Naive thymus-derived CD4-positive, alpha-beta T cell (primary cell): ENCODE measurements at regions of chr11 and their contacts with region 1.

Region 1: GRCh38 chr11:67239783-67240575 is 26.3 kb upstream of the GRK2 start:
- DNase-seq: peak; percentile 81 to 99 (median 98)
- ATAC-seq: peak; percentile 94
- H3K4me3 ChIP-seq: peak overlapping the region; percentile 89
- H3K4me3 Mint-ChIP-seq: peak overlapping the region; percentile 93 to 100 (median 98)
- H3K27ac ChIP-seq: peak overlapping the region; percentile 97
- H3K27ac Mint-ChIP-seq: peak overlapping the region; percentile 92 to 100 (median 99)
- H3K4me1 ChIP-seq: peaks cover 24 to 41% of the 10 kb centered on the region in 2 donors
- H3K4me1 Mint-ChIP-seq: peaks cover 47 to 62% (median 61%) of the 10 kb centered on the region in 7 donors
- H3K27me3 ChIP-seq: no peaks in the 10 kb centered on the region
- H3K27me3 Mint-ChIP-seq: no peaks in the 10 kb centered on the region

Region 2: DNA sequence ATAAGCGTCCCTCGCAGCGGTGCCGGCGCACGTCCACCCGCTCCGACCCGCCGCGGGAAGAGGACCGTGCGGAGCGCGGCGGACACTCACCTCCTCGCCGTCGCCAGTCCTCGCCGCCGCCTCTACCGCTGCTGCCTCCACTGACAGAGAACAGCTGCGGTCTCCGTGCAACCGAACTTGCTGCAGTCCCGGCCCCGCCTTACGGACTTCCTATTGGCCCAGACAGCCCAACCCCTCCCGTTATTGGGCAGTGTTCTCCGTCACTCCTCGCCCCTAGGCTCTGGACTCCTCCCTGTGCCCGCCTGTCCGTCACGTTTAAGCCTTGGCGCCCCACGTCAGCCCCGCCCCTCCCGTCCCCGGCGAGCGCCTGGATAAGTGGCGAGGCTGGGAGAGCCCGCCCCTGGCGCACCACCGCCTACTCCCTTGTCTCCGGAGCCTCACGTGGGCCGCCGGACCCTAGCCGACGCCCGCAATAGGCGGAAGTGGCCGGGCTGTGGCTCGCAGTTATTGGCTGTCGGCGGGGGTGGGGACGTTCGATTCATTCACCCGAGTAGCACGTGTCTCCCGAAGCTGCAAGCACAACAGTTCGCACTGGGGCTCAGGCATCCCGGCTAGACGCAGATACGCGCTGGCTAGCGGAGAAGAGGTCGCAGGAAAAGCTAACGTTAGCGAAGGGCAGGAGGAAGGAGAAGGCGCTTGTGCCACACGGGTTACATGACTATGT is 281.6 kb before region 1 on chr11 and contains the start of gene PC:
- CTCF ChIA-PET with region 1: no interaction called
- POLR2A ChIA-PET with region 1: interaction called, 4 read pairs
- intact Hi-C with region 1: loop called (anchors 2 to 5 kb)
- DNase-seq: peak; percentile 83 to 98 (median 96)
- ATAC-seq: peak; percentile 98
- H3K4me3 ChIP-seq: peak within 1 kb of the TSS; percentile 81
- H3K4me3 Mint-ChIP-seq: peak within 1 kb of the TSS; percentile 82 to 95 (median 91)
- H3K27ac ChIP-seq: peak within 1 kb of the TSS; percentile 64
- H3K27ac Mint-ChIP-seq: peak within 1 kb of the TSS; percentile 76 to 93 (median 87)
- H3K4me1 ChIP-seq: peaks cover 8 to 19% of the 10 kb centered on the region in 2 donors
- H3K4me1 Mint-ChIP-seq: peaks cover 16 to 31% (median 27%) of the 10 kb centered on the region in 7 donors
- H3K27me3 ChIP-seq: no peaks in the 10 kb centered on the region
- H3K27me3 Mint-ChIP-seq: peaks cover 0 to 6% (median 0%) of the 10 kb centered on the region in 5 donors
- total RNA-seq, gene PC: 8.4 to 11.2 (median 10.0) TPM

Region 3: GRCh38 chr11:67099831-67100324 is 140.1 kb before region 1 on chr11:
- CTCF ChIA-PET with region 1: no interaction called
- POLR2A ChIA-PET with region 1: interaction called, 7 read pairs
- intact Hi-C with region 1: loop called in 1 of 2 experiments (anchors 5 kb)
- DNase-seq: peak in 1 of 9 donors; percentile 19
- ATAC-seq: no peak
- H3K4me3 ChIP-seq: no peak overlapping the region
- H3K4me3 Mint-ChIP-seq: peak overlapping the region in 3 of 10 donors; percentile 3 to 50 (median 29)
- H3K27ac ChIP-seq: peak overlapping the region; percentile 48
- H3K27ac Mint-ChIP-seq: peak overlapping the region; percentile 54 to 91 (median 86)
- H3K4me1 ChIP-seq: peaks cover 7 to 27% of the 10 kb centered on the region in 2 donors
- H3K4me1 Mint-ChIP-seq: peaks cover 28 to 52% (median 39%) of the 10 kb centered on the region in 7 donors
- H3K27me3 ChIP-seq: no peaks in the 10 kb centered on the region
- H3K27me3 Mint-ChIP-seq: no peaks in the 10 kb centered on the region

Region 4: DNA sequence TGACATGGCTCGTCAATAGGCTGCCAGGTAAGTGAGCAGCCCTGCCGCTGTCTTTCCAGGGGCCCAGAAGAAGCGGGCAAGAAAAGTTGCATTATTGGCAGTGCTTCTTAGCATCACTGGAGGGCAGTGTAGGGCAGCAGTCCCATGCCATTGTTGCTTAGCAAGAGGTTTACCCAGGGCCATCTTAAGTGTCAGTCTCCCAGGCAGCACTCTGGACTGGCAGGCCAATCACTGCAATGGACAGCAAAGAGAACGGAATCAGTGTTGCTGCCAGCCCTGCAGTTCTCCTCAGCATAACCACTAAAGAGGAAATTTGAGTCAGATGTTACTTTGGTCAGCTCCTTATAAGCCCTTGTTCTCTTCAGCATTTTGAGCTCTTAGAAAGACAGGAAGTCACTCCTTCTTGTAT is 12.9 kb after region 1 on chr11:
- CTCF ChIA-PET with region 1: interaction called, 4 read pairs
- POLR2A ChIA-PET with region 1: interaction called, 40 read pairs
- intact Hi-C with region 1: loop called in 1 of 2 experiments (anchors 1 kb)
- DNase-seq: peak in 6 of 9 donors; percentile 40 to 50 (median 46)
- ATAC-seq: peak; percentile 82
- H3K4me3 ChIP-seq: no peak overlapping the region
- H3K4me3 Mint-ChIP-seq: peak overlapping the region in 2 of 10 donors; percentile 35 to 47
- H3K27ac ChIP-seq: peak overlapping the region; percentile 33
- H3K27ac Mint-ChIP-seq: peak overlapping the region in 8 of 9 donors; percentile 25 to 71 (median 49)
- H3K4me1 ChIP-seq: peaks cover 4 to 21% of the 10 kb centered on the region in 2 donors
- H3K4me1 Mint-ChIP-seq: peaks cover 20 to 59% (median 40%) of the 10 kb centered on the region in 7 donors
- H3K27me3 ChIP-seq: no peaks in the 10 kb centered on the region
- H3K27me3 Mint-ChIP-seq: no peaks in the 10 kb centered on the region

Region 5: GRCh38 chr11:67277231-67277961 is 37.4 kb after region 1 on chr11:
- CTCF ChIA-PET with region 1: no interaction called
- POLR2A ChIA-PET with region 1: interaction called, 22 read pairs
- intact Hi-C with region 1: no loop called
- DNase-seq: peak; percentile 79 to 94 (median 93)
- ATAC-seq: peak; percentile 97
- H3K4me3 ChIP-seq: peak overlapping the region; percentile 90
- H3K4me3 Mint-ChIP-seq: peak overlapping the region; percentile 62 to 99 (median 88)
- H3K27ac ChIP-seq: peak overlapping the region; percentile 93
- H3K27ac Mint-ChIP-seq: peak overlapping the region; percentile 87 to 100 (median 97)
- H3K4me1 ChIP-seq: peaks cover 79 to 87% of the 10 kb centered on the region in 2 donors
- H3K4me1 Mint-ChIP-seq: peaks cover 47 to 83% (median 66%) of the 10 kb centered on the region in 7 donors
- H3K27me3 ChIP-seq: no peaks in the 10 kb centered on the region
- H3K27me3 Mint-ChIP-seq: no peaks in the 10 kb centered on the region

Region 6: DNA sequence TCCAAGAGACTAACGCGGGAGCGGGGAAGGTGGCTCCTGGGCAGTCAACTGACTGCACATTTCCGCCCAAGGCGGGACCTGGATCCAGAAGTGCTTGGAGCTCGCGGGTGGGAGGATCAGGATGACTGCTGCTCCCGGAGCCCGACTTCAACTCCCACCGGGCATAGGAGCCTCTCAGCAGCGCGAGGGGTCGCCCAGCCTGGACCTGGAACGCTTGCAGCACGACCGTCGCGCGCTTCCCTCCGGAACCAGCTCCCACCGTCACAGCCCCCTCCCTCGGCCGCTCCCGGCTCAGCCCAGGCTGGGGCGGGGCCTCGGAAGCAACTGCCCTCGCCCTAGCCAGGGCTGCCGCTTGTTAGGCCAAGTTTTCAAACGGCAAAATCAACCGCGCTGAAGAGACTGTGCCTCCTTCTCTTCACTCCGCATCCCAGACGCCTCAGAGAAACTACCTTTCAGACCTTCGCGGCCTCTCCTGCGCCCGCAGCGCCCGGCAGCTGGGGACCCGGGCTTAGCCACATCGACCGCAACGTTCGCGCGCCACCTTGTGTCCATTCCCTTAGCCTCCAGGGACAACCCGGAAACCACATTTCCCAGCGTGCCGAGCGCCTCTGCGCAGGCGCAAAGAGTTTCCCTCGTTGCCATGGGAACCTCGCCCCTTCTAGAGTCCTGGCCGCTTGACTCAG is 77.4 kb after region 1 on chr11:
- CTCF ChIA-PET with region 1: no interaction called
- POLR2A ChIA-PET with region 1: interaction called, 21 read pairs
- intact Hi-C with region 1: loop called (anchors 1 kb)
- DNase-seq: peak; percentile 95 to 98 (median 97)
- ATAC-seq: peak; percentile 93
- H3K4me3 ChIP-seq: peak overlapping the region; percentile 64
- H3K4me3 Mint-ChIP-seq: peak overlapping the region; percentile 89 to 99 (median 98)
- H3K27ac ChIP-seq: peak overlapping the region; percentile 73
- H3K27ac Mint-ChIP-seq: peak overlapping the region; percentile 88 to 99 (median 95)
- H3K4me1 ChIP-seq: peaks cover 15 to 23% of the 10 kb centered on the region in 2 donors
- H3K4me1 Mint-ChIP-seq: peaks cover 25 to 48% (median 39%) of the 10 kb centered on the region in 7 donors
- H3K27me3 ChIP-seq: no peaks in the 10 kb centered on the region
- H3K27me3 Mint-ChIP-seq: peaks cover 0 to 13% (median 0%) of the 10 kb centered on the region in 5 donors

Region 7: GRCh38 chr11:67468835-67469811 is 229.1 kb after region 1 on chr11 and contains the start of gene TMEM134:
- CTCF ChIA-PET with region 1: no interaction called
- POLR2A ChIA-PET with region 1: interaction called, 4 read pairs
- intact Hi-C with region 1: loop called in 1 of 2 experiments (anchors 1 kb)
- DNase-seq: peak; percentile 82 to 95 (median 89)
- ATAC-seq: peak; percentile 92
- H3K4me3 ChIP-seq: peak within 1 kb of the TSS; percentile 74
- H3K4me3 Mint-ChIP-seq: peak within 1 kb of the TSS; percentile 87 to 95 (median 90)
- H3K27ac ChIP-seq: peak within 1 kb of the TSS; percentile 94
- H3K27ac Mint-ChIP-seq: peak within 1 kb of the TSS; percentile 79 to 97 (median 88)
- H3K4me1 ChIP-seq: peaks cover 17 to 37% of the 10 kb centered on the region in 2 donors
- H3K4me1 Mint-ChIP-seq: peaks cover 23 to 42% (median 29%) of the 10 kb centered on the region in 7 donors
- H3K27me3 ChIP-seq: no peaks in the 10 kb centered on the region
- H3K27me3 Mint-ChIP-seq: peaks cover 0 to 6% (median 0%) of the 10 kb centered on the region in 5 donors
- total RNA-seq, gene TMEM134: 52.4 to 94.6 (median 70.6) TPM